ENCODE measurements at regions of chr1 and their contacts with region 1.

Region 1: DNA sequence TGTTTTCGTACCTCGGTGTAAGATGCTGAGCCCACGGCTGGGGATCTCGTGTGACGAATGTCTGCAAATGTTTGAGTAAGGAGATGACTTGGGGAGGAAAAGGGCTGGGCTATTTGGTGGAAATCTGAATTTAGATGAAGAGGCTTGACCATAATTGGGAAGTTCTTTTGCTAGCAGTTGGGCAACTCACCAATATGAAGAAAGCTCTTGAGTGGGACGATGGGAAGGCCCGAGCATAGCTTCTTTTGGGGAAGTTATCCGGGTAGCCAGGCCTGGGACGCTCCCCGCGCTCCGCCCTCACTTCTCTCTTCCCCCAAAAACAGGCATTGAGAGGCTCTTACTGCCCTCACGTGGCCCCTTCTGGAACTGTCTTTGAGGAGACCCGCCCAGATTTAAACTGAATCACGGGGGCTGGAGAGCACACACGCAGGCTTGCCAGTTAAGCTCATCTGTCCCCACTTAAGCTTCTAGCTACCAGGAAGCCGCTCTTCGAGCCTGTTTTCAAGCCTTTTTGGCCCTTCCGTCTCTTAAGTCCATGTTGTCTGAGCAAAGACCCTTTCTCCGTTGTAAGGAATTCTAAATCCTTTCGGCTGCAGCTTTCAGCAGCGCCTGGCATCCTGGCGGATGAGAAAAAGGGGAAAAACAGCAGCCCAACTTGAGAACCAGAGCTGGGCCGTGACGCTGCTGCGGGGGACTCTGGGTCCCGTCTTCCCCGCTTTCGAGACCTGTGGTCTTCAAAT is 93.1 kb downstream of the NID1 start:
- DNase-seq: peak; percentile 68
- ATAC-seq: peak; percentile 98
- H3K4me3 ChIP-seq: peak overlapping the region; percentile 15 to 25; a peak in 3 of 4 replicates
- H3K27ac ChIP-seq: no peak overlapping the region
- H3K4me1 ChIP-seq: peaks cover 4 to 11% of the 10 kb centered on the region in 2 experiments
- H3K27me3 ChIP-seq: no peaks in the 10 kb centered on the region
- CTCF ChIP-seq: peak; percentile 80 to 84 (median 82)
- POLR2A ChIP-seq: peak; percentile 49
- RAD21 ChIP-seq: peak; percentile 96

Region 2: GRCh38 chr1:235253219-235253962 is 718.4 kb before region 1 on chr1:
- CTCF ChIA-PET with region 1: no interaction called
- POLR2A ChIA-PET with region 1: no interaction called
- RAD21 ChIA-PET with region 1: no interaction called
- intact Hi-C with region 1: loop called (anchors 10 kb)
- DNase-seq: peak; percentile 54
- ATAC-seq: peak; percentile 100
- H3K4me3 ChIP-seq: no peak overlapping the region
- H3K27ac ChIP-seq: no peak overlapping the region
- H3K4me1 ChIP-seq: no peaks in the 10 kb centered on the region
- H3K27me3 ChIP-seq: no peaks in the 10 kb centered on the region
- CTCF ChIP-seq: peak; percentile 84 to 89 (median 87)
- POLR2A ChIP-seq: no peak
- RAD21 ChIP-seq: peak; percentile 89

Region 3: GRCh38 chr1:235513495-235514366 is 458.0 kb before region 1 on chr1:
- CTCF ChIA-PET with region 1: interaction called, 8 read pairs
- POLR2A ChIA-PET with region 1: no interaction called
- RAD21 ChIA-PET with region 1: no interaction called
- intact Hi-C with region 1: loop called (anchors 2 kb)
- DNase-seq: peak; percentile 59
- ATAC-seq: peak; percentile 72
- H3K4me3 ChIP-seq: no peak overlapping the region
- H3K27ac ChIP-seq: no peak overlapping the region
- H3K4me1 ChIP-seq: no peaks in the 10 kb centered on the region
- H3K27me3 ChIP-seq: no peaks in the 10 kb centered on the region
- CTCF ChIP-seq: peak; percentile 91 to 92 (median 91)
- POLR2A ChIP-seq: no peak
- RAD21 ChIP-seq: peak; percentile 92

Region 4: GRCh38 chr1:235735621-235736020 is 236.1 kb before region 1 on chr1:
- CTCF ChIA-PET with region 1: interaction called, 8 read pairs
- POLR2A ChIA-PET with region 1: no interaction called
- RAD21 ChIA-PET with region 1: no interaction called
- intact Hi-C with region 1: loop called (anchors 1 kb)
- DNase-seq: no peak
- ATAC-seq: no peak
- H3K4me3 ChIP-seq: no peak overlapping the region
- H3K27ac ChIP-seq: no peak overlapping the region
- H3K4me1 ChIP-seq: peaks cover 3 to 19% of the 10 kb centered on the region in 2 experiments
- H3K27me3 ChIP-seq: no peaks in the 10 kb centered on the region
- CTCF ChIP-seq: no peak
- POLR2A ChIP-seq: no peak
- RAD21 ChIP-seq: no peak

Region 5: DNA sequence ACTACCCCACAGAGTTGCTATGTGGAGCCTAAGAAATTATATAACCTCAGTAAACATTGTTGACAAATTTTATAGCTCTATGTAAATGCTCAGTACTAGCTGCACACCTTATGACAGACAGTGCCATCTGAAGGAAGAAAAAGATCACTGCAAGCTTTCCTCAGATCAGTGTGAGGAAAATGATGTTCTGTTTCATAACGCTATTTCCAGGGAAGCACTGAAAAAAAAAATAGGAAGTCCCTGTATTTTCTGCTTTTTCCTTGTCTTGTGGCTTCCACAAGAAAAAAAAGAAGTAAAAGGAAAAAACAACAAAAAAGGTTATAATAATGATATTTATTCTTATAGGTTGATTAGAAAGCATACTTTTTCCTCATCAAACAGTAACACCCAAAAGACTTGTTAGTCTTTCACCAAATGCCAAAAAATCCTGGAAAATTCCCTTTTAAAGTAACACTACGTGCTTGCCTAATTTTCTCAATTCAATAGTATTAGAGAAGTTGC is 128.2 kb before region 1 on chr1:
- CTCF ChIA-PET with region 1: interaction called, 10 read pairs
- POLR2A ChIA-PET with region 1: no interaction called
- RAD21 ChIA-PET with region 1: no interaction called
- intact Hi-C with region 1: no loop called
- DNase-seq: peak; percentile 21
- ATAC-seq: peak; percentile 94
- H3K4me3 ChIP-seq: no peak overlapping the region
- H3K27ac ChIP-seq: no peak overlapping the region
- H3K4me1 ChIP-seq: peaks cover 0 to 5% of the 10 kb centered on the region in 2 experiments; a peak in 1 of 4 replicates
- H3K27me3 ChIP-seq: no peaks in the 10 kb centered on the region
- CTCF ChIP-seq: peak; percentile 40 to 62 (median 55); a peak in 5 of 6 replicates
- POLR2A ChIP-seq: no peak
- RAD21 ChIP-seq: peak; percentile 68

Region 6: DNA sequence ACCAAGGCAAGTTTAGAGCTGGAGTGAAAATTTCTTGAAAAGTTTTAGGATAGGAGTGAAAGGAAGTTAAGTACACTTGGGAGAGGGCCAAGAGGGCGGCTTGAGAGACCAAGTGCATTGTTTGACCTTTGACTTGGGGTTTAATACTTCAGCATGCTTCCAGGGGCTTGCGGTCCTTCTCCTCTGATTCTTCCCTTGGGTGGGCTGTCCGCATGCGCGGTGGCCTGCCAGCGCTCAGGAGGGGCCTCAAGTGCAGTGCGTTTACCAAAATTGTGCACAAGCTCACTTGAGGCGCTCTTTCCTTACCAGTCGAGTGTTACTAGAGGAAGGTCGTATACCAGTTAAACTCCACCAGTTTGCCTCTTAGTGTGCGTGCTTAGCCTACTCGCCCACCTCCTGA is 13.7 kb before region 1 on chr1:
- CTCF ChIA-PET with region 1: interaction called, 15 read pairs
- POLR2A ChIA-PET with region 1: no interaction called
- RAD21 ChIA-PET with region 1: no interaction called
- intact Hi-C with region 1: no loop called
- DNase-seq: no peak
- ATAC-seq: no peak
- H3K4me3 ChIP-seq: no peak overlapping the region
- H3K27ac ChIP-seq: no peak overlapping the region
- H3K4me1 ChIP-seq: peaks cover 0 to 7% of the 10 kb centered on the region in 2 experiments; a peak in 2 of 4 replicates
- H3K27me3 ChIP-seq: no peaks in the 10 kb centered on the region
- CTCF ChIP-seq: no peak
- POLR2A ChIP-seq: no peak
- RAD21 ChIP-seq: no peak

Measured in HCT116 (cell line).